Right ventricle myocardium inferior (tissue), 1 donor: ENCODE measurements at regions of chr14 and their contacts with region 1.

Region 1: DNA sequence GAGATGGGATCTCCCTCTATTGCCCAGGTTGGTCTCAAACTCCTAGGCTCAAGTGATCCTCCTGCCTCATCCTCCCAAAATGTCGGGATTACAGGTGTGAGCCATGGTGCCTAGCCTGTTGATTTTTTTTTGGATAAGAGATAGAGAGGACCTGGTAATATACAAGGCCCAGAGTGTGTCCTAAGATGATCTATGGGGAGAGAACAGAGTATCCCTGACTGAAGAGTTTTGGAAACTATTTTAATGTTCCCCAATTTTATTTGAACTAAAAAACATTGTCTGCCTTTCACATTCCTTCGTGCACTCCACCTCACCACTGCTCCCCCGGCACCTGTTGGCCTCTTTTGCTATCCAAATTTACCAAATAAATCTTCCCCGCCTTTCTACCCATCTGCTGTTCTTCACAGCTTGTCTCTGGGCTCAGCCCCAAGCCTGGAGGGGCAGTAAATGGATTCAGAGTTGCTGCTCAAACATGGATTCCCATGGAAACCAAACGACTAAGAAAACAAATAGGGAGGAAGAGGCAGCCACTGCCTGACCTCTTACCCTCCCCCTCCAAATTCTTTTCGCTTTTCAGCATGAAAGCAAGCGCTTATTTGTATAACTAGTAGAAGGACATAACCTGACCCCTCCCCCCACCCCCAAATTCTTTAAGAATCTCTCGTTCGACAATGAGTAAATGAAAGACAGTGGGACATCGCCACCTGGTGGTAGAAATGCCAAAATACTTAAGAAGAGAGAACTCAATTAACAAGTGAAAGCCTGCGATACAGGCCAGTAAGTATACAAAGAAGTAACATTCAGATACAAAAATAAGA is 22.6 kb downstream of the OR10G3 start:
- DNase-seq: peak; percentile 73
- ATAC-seq: peak; percentile 84

Region 2: DNA sequence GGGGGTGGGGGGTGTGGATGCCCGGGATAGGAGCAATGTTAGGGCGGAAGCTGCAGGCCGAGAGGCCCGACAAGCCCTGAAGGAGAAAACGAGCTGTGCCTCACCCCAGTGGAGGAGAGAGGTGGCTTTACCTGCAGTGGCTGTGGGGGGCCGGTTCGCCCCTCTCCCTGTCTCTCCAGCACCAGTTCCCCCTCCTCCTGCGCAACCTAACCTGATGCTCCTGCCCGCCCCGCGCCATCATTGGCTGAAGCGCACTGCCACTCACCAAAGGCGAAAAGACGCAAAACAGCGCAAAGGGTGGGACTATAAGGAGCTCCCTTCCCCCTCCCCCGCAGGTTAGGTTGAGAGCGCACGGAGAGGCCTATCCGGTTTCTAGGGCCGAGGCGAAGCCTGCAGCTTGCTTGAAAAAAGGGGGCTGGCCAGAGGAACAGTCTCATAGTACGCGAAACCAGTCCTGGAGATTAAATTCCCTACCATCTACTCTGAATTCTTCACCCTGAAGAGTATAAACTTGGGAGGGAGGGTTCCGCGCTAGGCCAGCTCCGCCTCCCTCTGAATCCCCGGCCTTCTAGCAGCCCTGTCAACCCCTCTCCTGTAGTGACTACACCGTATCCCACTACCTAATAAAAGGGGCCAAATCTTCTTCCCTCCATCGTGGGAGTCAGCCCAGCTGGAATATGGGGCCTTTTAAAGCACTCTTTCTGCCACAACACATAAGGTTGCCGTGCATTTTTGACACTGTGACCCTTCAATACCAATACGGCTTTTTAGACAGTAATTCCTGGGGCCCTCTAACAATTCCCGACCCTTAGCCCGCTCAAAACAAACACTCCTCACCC is 120.0 kb before region 1 on chr14:
- intact Hi-C with region 1: loop called (anchors 1 kb)
- DNase-seq: peak; percentile 99
- ATAC-seq: peak; percentile 100

Region 3: DNA sequence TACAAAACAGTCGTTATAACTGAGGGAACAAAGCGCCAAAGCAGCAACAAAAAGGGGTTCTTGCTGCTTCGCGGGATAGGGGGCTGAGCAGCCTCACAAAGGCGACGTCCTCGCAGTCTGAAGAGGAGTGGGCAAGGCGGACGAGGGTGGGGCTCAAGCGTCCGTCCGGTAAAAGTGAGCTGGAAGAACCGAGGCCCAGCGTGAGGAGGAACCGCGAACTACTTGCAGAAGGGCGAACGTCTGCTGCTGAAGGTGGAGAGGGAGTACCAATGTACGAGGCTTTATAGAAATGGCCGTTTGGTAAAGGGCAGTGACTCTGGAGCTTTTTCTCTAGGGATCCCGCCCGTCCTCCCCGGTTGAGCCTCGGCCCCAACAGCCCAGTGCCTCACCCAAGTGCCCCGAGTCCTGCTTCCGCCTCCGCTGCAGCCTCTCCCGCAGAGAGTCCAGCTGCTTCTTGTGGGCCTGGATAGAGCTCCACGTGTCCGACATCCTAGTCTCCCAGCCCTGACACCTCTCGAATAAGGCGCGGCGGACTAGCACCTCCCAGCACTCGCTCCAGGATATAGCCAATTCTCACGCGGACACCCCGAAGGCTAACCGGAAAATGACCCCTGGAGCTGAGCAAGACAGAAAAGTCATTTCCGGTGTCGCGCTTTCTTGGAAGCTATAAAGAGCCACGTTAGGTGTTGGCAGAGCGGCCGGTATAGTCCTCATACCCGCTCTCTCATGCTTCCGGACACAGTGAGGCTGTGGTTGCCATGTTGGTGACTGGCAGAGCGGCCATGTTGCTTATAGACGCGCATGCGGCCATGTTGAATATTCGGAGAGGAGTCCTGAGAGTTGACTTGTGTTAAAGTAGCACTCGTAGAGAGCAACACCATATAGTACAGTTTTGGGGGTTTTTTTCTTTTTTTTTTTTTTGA is 46.3 kb before region 1 on chr14 and contains the start of gene METTL3:
- intact Hi-C with region 1: loop called (anchors 5 kb)
- DNase-seq: peak; percentile 99
- ATAC-seq: peak; percentile 99
- total RNA-seq, gene METTL3: 24.9 TPM

Region 4: DNA sequence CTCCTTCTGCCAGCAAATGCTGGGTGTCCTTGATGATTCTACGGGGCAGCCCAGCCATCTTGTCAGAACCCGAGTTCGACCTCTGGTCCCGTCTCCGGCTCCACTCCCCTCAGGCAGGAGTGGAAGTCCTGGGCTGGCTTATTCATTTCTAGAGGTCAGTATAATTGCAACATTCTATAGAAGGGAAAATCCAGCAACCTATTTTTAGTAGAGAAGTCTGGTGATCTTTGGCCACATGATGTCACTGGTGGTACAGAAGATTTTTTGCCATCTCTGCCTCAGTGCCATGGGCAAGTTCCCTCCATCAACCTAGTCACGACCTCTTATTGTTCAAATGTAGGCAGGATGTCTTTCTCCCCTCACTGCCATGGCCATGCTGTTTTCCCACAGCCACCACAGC is 55.0 kb after region 1 on chr14:
- intact Hi-C with region 1: no loop called
- DNase-seq: no peak
- ATAC-seq: no peak

Region 5: DNA sequence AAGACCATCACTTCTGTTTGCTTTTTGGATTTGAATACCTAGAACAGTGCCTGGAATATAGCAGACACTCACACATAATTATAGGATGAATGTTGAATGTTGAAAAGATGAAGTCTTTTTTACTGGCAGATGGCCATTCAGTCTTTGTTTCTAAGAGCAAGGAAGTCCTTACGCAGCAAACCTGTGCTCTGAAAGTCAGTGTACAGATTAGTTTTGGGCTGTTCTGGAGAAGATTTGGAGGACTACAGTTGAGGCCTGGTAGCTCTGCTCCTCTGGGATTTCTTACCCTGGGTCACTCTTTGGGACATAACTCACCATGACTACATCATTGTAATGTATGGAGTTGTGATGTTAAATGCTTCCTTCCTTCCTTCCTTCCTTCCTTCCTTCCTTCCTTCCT is 99.7 kb after region 1 on chr14:
- intact Hi-C with region 1: no loop called
- DNase-seq: no peak
- ATAC-seq: no peak